Ascending aorta (tissue), 2 donors: ENCODE measurements at regions of chr7 and their contacts with region 1.

Region 1: DNA sequence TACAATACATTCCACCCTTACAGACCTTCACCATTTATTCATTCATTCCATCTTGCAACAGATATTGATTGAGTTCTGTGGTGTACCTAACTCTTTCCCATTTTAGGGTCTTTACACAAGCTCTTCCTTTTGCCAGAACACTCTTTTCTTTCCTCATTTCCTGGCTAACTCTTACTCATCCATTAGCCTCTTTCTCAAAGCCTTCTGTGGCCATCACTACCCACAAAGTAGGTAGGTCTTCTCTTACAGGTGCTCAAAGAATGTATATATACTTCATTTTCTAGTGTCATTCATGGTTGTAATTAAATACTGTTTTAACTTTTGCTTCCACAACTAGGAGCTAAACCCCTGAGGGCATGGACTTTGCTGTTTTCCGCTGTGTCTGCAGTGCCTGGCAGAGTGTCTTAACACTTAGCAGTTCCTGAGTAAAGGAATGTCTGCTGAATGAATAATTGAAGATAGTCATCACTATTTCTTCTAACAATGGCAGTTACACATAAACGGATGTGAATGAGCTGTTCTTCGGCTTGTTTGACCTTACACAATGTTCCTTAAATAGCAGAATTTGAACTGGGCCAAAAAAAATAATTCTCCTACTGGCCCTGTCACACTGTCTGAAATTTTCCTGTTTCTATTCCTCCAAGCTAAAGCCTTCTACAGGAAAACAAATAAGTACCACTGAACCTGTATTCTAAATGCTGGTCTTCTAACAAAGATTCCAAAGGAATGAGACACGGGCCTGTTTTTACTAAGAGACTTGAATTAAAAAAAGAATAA is 15.1 kb downstream of the BCAP29 start:
- DNase-seq: peak in 1 of 2 donors; percentile 75
- H3K4me3 ChIP-seq: no peak overlapping the region
- H3K27ac ChIP-seq: peak overlapping the region; percentile 79 to 93
- H3K4me1 ChIP-seq: peaks cover 4 to 58% of the 10 kb centered on the region in 2 donors
- H3K27me3 ChIP-seq: no peaks in the 10 kb centered on the region
- CTCF ChIP-seq: no peak

Region 2: DNA sequence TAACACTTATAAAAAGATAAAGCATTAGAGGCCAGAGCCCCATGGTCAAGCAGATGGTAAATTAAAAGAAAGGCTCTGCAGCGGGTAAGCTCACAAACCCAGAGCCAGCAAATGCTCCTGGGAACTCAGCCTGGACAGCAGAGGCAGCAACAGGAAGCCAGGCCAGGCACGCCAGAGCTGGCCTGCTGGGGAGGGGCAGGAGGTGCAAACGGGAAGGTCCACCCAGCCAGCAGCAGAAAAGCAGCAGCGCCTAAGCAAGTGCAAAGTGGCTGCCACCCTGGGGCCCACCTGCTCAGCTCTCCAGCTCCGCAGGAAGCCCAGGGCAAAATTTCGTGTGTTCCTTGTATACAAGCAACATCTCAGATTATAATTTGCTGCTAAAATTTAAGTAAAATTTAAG is 208.0 kb before region 1 on chr7:
- intact Hi-C with region 1: loop called (anchors 5 kb)
- DNase-seq: peak; percentile 12 to 76
- H3K4me3 ChIP-seq: peak overlapping the region in 1 of 2 donors; percentile 42
- H3K27ac ChIP-seq: peak overlapping the region; percentile 66 to 82
- H3K4me1 ChIP-seq: peaks cover 11 to 17% of the 10 kb centered on the region in 2 donors
- H3K27me3 ChIP-seq: no peaks in the 10 kb centered on the region
- CTCF ChIP-seq: no peak

Region 3: DNA sequence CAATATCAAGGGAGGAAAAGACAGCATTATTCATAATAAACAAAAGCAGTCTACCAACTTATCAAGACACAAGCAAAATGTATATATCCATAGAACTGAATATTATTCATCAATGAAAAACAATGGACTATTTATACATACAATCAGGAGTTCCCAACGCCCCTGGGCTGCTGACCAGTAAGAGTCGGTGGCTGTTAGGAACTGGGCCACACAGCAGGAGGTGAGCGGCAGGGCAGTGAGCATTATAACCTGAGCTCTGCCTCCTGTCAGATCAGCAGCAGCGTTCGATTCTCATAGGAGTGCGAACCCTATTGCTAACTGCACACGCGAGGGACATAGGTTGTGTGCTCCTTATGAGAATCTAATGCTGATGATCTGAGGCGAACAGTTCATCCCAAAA is 197.0 kb before region 1 on chr7:
- intact Hi-C with region 1: no loop called
- DNase-seq: no peak
- H3K4me3 ChIP-seq: no peak overlapping the region
- H3K27ac ChIP-seq: no peak overlapping the region
- H3K4me1 ChIP-seq: peaks cover 0 to 10% of the 10 kb centered on the region in 2 donors
- H3K27me3 ChIP-seq: no peaks in the 10 kb centered on the region
- CTCF ChIP-seq: no peak

Region 4: GRCh38 chr7:107538001-107538400 is 57.1 kb before region 1 on chr7:
- intact Hi-C with region 1: no loop called
- DNase-seq: no peak
- H3K4me3 ChIP-seq: no peak overlapping the region
- H3K27ac ChIP-seq: no peak overlapping the region
- H3K4me1 ChIP-seq: no peaks in the 10 kb centered on the region
- H3K27me3 ChIP-seq: no peaks in the 10 kb centered on the region
- CTCF ChIP-seq: no peak

Region 5: DNA sequence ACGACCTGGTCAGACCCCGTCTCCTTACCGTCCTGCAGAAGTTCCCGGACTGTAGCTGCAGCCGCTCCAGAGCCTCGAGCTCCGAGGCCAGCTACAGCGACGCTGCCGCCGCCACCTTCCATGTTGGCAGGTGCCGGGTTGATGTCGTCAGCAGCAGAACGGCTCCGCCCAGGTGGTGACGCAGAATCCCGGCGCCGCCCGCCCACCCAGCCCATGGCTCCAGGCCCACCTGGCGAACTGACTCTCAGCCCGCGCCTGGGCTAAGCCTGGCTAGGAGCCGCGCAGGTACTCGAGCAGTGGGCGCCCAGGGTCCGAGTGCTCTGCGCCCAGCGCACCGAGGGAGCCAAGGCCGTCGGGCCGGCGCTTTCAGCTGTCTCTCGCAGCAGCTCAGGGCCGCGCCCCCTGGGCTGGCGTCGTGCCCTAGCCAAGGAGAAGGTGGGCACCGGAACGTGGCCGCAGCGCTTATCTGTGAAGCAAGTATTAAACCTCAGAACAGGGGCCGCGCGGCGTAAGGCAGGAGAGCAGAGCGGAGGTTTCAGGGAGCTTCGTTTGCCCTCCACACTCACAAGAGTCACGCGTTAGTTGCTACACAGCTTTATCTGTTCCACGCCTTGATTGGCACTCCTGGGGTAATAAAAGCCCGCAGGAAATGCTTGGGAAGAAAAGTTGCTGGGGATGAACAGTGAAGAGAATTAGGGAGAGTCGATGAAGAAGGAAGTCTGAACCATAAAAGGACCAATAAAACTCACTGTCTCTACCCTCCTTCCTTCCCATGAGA is 31.2 kb before region 1 on chr7 and contains the starts of genes COG5 and DUS4L:
- intact Hi-C with region 1: loop called (anchors 1 kb)
- DNase-seq: peak; percentile 31 to 89
- H3K4me3 ChIP-seq: peak within 1 kb of the TSS; percentile 94 to 96
- H3K27ac ChIP-seq: peak within 1 kb of the TSS; percentile 96 to 97
- H3K4me1 ChIP-seq: peaks cover 3 to 21% of the 10 kb centered on the region in 2 donors
- H3K27me3 ChIP-seq: no peaks in the 10 kb centered on the region
- CTCF ChIP-seq: no peak
- total RNA-seq, gene COG5: 16.8 TPM
- total RNA-seq, gene DUS4L: 0.75 TPM

Region 6: DNA sequence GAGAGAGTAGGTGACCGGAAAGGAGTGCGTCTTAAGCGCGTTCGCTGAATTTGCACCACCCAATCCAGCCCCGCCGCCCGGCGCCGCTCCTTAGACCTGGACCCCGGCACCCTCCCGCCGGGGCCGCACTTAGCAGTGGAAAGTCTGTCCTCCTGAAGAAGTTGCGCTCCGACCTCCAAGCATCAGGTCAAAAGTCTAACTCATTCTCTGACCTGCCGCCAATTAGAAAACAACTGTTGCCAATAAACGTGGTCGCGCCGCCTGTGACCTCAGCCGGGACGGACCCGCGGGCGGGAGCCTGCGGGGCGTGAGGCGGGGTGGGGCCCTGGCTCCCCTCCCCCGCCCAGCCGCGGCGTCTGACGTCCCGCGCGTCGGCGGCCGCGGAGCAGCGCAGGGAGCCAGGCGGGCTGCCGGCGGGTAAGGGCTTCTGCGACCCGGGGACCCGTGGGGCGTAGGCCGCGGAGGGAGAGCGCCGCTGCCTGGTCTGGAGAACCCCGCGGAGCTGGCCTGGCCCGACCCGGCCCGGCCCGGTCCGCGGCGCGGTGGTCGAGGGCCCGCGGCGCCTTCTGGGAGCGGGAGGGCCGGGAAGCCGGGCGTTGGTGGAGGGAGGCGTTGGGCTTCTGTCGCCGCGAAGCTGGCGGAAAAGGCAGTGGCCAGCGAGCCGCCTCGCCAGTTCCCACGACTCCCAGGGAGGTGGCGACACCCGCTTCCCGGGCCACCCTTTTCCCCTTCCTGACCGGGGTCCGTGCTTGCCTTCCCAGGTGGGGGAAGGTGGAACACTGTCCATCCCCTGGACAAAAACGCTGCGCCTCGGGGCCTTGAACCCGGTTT is 15.0 kb before region 1 on chr7 and contains the start of gene BCAP29:
- intact Hi-C with region 1: loop called (anchors 1 kb)
- DNase-seq: peak; percentile 19 to 89
- H3K4me3 ChIP-seq: peak within 1 kb of the TSS; percentile 84 to 91
- H3K27ac ChIP-seq: peak within 1 kb of the TSS; percentile 93 to 97
- H3K4me1 ChIP-seq: peaks cover 0 to 11% of the 10 kb centered on the region in 2 donors
- H3K27me3 ChIP-seq: no peaks in the 10 kb centered on the region
- CTCF ChIP-seq: peak; percentile 22 to 50 (median 29)
- total RNA-seq, gene BCAP29: 73.2 TPM

Region 7: GRCh38 chr7:107622429-107622828 is 27.3 kb after region 1 on chr7:
- intact Hi-C with region 1: no loop called
- DNase-seq: no peak
- H3K4me3 ChIP-seq: no peak overlapping the region
- H3K27ac ChIP-seq: no peak overlapping the region
- H3K4me1 ChIP-seq: no peaks in the 10 kb centered on the region
- H3K27me3 ChIP-seq: no peaks in the 10 kb centered on the region
- CTCF ChIP-seq: no peak

Region 8: GRCh38 chr7:107700570-107700969 is 105.4 kb after region 1 on chr7:
- intact Hi-C with region 1: loop called (anchors 5 kb)
- DNase-seq: no peak
- H3K4me3 ChIP-seq: no peak overlapping the region
- H3K27ac ChIP-seq: peak overlapping the region; percentile 31 to 55
- H3K4me1 ChIP-seq: peaks cover 2 to 3% of the 10 kb centered on the region in 2 donors
- H3K27me3 ChIP-seq: no peaks in the 10 kb centered on the region
- CTCF ChIP-seq: no peak

Region 9: DNA sequence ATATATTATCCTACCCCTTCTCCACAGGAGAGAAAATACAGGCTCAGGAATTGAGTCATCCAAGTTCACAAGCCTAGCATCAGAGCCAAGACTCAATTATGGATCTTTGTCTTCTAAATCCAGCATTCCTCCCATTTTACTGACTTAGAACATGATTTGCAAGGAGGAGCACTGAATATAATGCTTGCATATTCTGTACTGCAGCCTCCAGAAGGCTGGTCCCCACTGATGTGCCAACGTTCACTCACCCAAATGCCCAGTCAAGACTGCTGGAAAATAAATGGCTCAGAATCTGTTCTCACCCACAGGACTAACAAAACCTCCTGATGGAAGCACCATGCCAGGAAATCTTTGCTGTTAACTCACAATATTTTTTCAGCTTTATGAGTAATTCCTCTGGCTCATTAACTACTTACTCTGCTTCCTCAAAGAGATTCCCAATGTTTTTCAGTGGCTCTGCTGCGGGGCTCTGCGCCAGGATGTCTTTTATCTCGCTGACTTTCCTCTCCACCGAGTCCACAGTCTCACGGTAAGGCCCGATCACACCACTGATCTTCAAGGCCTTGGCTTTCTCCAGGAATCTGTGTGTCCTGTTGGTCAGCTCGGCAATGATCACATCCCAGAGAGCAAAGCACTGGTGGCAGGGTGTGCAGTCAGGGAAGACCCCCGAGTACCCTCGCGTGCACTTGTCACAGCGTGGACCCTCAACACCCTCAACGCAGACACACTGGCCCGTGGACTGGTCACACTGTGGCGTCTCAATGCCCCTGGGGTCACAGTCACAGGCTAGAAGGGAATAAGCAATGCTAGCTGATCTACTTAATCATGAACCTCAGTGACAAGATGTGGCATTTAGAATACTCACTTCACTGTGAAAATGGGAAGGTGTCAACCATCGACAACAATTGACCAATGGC is 344.7 kb after region 1 on chr7:
- intact Hi-C with region 1: loop called (anchors 10 kb)
- DNase-seq: peak in 1 of 2 donors; percentile 88
- H3K4me3 ChIP-seq: no peak overlapping the region
- H3K27ac ChIP-seq: peak overlapping the region; percentile 85 to 88
- H3K4me1 ChIP-seq: peaks cover 13 to 22% of the 10 kb centered on the region in 2 donors
- H3K27me3 ChIP-seq: no peaks in the 10 kb centered on the region
- CTCF ChIP-seq: no peak

Region 10: DNA sequence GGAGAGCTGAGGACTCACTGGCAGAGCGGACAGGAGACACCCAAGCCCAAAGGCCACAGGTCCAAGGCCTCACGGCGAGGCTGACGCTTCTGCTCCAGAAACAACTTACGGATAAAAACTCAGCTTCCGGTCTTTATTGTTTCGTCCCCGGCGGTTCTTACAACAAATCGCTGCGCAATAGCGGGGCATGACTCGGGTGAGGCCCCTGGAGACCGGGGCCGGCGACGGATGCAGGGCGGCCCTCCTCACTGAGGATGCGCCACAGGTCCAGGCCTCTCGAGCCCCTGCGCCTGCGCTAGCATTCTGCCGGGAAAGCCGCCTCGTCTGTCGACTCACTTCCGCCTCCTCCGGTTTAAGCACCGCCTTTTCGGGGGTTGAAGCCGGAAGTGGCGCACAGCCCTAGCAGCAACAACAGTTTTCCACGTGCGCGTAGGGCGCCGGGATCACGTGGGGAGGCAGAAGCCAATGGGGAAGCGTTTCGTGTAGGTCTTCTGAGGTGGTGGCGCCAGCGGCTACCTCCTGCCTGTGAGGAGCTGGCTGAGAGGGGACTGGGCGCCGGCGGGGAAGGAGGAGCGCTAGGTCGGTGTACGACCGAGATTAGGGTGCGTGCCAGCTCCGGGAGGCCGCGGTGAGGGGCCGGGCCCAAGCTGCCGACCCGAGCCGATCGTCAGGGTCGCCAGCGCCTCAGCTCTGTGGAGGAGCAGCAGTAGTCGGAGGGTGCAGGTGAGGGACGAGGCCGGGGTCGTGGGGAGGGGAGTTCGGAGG is 974.4 kb after region 1 on chr7 and contains the starts of genes DNAJB9 and THAP5:
- intact Hi-C with region 1: loop called (anchors 5 kb)
- DNase-seq: peak; percentile 99 to 100
- H3K4me3 ChIP-seq: peak within 1 kb of the TSS; percentile 77 to 87
- H3K27ac ChIP-seq: peak within 1 kb of the TSS; percentile 98
- H3K4me1 ChIP-seq: peaks cover 4 to 11% of the 10 kb centered on the region in 2 donors
- H3K27me3 ChIP-seq: no peaks in the 10 kb centered on the region
- CTCF ChIP-seq: no peak
- total RNA-seq, gene DNAJB9: 7.5 TPM
- total RNA-seq, gene THAP5: 18.1 TPM